WTC11 (cell line): ENCODE measurements at regions of chr1 and their contacts with region 1.

Region 1: GRCh38 chr1:27332536-27333281 is 9.1 kb upstream of the SYTL1 start:
- DNase-seq: peak; percentile 80
- ATAC-seq: peak; percentile 92
- H3K4me3 Mint-ChIP-seq: no peak overlapping the region
- H3K27ac Mint-ChIP-seq: no peak overlapping the region; the same call in 1 of the 2 replicates
- H3K4me1 Mint-ChIP-seq: no peaks in the 10 kb centered on the region
- H3K27me3 Mint-ChIP-seq: no peaks in the 10 kb centered on the region; the same call in 1 of the 2 replicates
- CTCF ChIP-seq: peak; percentile 88

Region 2: GRCh38 chr1:27321813-27322577 is 10.7 kb before region 1 on chr1 and contains the start of gene TMEM222:
- CTCF ChIA-PET with region 1: interaction called, 15 read pairs
- POLR2A ChIA-PET with region 1: interaction called, 3 read pairs
- DNase-seq: peak; percentile 97
- ATAC-seq: peak; percentile 98
- H3K4me3 Mint-ChIP-seq: peak within 1 kb of the TSS; percentile 98
- H3K27ac Mint-ChIP-seq: peak within 1 kb of the TSS; percentile 97
- H3K4me1 Mint-ChIP-seq: peaks cover 17% of the 10 kb centered on the region
- H3K27me3 Mint-ChIP-seq: peaks cover 4% of the 10 kb centered on the region
- CTCF ChIP-seq: no peak
- total RNA-seq, gene TMEM222: 24.9 to 29.8 TPM (median 28.7 TPM) in 3 replicates

Region 3: GRCh38 chr1:27349784-27350662 is 17.3 kb after region 1 on chr1:
- CTCF ChIA-PET with region 1: interaction called, 23 read pairs
- POLR2A ChIA-PET with region 1: interaction called, 8 read pairs
- DNase-seq: peak; percentile 80
- ATAC-seq: peak; percentile 41
- H3K4me3 Mint-ChIP-seq: peak overlapping the region; percentile 75
- H3K27ac Mint-ChIP-seq: no peak overlapping the region
- H3K4me1 Mint-ChIP-seq: peaks cover 18% of the 10 kb centered on the region
- H3K27me3 Mint-ChIP-seq: peaks cover 12% of the 10 kb centered on the region
- CTCF ChIP-seq: no peak

Region 4: GRCh38 chr1:27357281-27358037 is 24.8 kb after region 1 on chr1:
- CTCF ChIA-PET with region 1: interaction called, 23 read pairs
- POLR2A ChIA-PET with region 1: no interaction called
- DNase-seq: peak; percentile 87
- ATAC-seq: peak; percentile 70
- H3K4me3 Mint-ChIP-seq: peak overlapping the region; percentile 37
- H3K27ac Mint-ChIP-seq: no peak overlapping the region
- H3K4me1 Mint-ChIP-seq: peaks cover 17% of the 10 kb centered on the region
- H3K27me3 Mint-ChIP-seq: peaks cover 49% of the 10 kb centered on the region
- CTCF ChIP-seq: peak; percentile 100

Region 5: DNA sequence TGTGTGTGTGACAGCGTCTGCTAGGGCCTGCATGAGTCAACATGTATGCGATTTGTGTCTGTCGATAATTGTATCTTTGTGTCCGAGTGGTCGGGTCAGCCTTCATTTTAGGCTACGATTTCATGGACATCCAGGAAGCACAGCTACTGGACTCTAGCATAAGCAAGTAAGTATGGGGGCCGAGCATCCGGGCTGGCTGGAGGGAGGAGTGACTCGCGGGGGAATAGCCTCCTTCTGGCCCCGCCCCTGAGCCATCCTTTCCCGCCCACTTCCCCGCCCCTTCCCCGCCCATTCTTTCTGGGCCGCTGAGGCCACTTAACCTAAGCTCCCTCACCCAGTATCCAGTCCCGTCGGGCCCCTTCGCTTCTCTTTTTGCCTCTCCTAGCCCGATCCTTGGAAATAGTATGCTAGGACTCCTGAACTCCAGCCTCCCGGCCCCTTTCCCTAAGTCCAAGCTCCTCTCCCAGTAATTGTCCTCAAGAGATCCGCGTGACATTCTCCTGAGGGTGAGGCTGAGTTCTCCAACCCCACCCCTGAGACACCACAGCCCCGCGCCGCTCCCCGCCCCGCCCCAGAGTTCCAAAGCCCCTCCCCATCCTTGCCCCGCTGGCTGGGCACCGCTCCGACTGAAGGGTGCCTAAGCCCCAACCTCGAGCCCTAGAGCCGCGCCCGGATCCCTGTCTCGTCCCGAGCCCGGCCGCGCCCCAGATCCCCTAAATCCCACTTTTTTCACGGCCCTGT is 32.8 kb after region 1 on chr1:
- CTCF ChIA-PET with region 1: interaction called, 12 read pairs
- POLR2A ChIA-PET with region 1: no interaction called
- DNase-seq: peak; percentile 86
- ATAC-seq: peak; percentile 53
- H3K4me3 Mint-ChIP-seq: peak overlapping the region; percentile 84
- H3K27ac Mint-ChIP-seq: peak overlapping the region; percentile 97
- H3K4me1 Mint-ChIP-seq: peaks cover 25% of the 10 kb centered on the region
- H3K27me3 Mint-ChIP-seq: peaks cover 33% of the 10 kb centered on the region
- CTCF ChIP-seq: no peak

Region 6: DNA sequence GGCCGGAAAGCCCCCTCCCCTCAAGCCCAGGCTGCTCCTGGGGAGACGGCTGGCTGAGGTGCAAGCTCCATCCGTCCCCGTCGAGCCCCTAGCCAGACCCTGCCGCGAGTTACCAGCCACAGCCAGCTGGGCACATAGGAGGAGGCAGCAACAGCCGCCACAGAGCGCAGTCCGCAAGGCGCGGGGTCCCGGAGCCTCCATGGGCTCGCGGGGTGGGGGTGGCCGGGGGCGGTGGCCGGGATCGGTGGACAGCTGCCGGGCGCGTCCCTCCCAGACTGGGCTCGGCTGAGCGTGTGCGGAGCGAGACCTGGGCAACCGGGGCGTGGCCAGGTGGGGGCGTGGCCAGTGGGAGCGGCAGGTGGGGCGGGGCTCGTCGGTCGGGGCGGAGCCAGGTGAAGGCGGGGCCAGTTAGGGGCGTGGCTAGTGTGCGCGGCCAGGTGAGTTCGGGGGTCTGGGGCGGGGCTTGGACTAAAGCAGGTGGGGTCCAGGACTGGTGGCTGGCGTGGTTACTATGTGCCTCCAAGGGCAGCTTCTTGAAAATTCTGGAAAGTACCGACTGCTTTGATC is 50.4 kb after region 1 on chr1 and contains the start of gene CD164L2:
- CTCF ChIA-PET with region 1: interaction called, 10 read pairs
- POLR2A ChIA-PET with region 1: no interaction called
- DNase-seq: peak; percentile 93
- ATAC-seq: peak; percentile 95
- H3K4me3 Mint-ChIP-seq: peak within 1 kb of the TSS; percentile 67
- H3K27ac Mint-ChIP-seq: no peak within 1 kb of the TSS
- H3K4me1 Mint-ChIP-seq: peaks cover 4% of the 10 kb centered on the region; the same call in 1 of the 2 replicates
- H3K27me3 Mint-ChIP-seq: peaks cover 31% of the 10 kb centered on the region
- CTCF ChIP-seq: no peak
- total RNA-seq, gene CD164L2: 3.0 to 5.5 TPM (median 4.3 TPM) in 3 replicates